ENCODE measurements at regions of chr5 and their contacts with region 1.

Region 1: DNA sequence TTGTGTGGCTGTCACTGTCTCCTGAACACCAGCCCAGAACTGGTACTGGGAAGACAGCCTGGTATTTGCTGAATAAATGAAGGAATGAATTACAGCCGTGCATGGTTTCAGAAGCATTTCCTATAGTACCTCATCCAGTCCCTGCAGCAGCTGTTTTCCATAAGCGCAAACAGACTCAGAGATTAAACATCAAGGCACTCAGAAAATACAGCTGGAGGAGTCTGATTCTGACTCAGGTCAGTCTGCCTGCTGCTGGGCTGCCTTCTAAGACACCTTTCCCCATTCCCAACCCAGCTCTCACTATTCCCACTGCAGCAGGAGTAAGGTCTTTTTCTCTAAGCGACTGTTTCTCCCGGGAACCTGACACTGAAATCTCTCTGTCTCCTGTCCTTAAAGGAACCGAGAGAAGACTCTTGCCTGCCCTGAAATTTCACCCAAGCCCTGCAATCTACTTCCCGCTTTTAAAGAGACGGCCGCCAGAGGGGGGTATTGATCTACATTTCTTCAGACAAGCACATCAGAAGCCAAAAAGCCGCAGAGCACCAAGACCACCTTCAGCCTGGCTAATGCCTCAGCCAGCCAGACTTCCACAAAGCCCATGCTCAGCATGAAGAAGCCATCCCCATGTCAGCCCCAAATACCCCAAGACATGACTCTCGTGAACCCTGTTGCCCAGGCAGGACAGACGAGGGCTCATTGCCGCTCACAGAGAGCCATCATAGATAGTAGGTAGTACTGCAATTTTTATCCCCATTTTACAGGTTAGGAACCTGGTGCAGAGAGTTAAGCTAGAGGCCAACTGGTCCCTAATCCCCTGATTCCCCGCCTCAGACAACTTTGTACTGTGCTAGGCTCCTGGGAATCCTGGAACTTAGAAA is 5.4 kb upstream of the FOXI1 start:
- DNase-seq: peak; percentile 54 to 78
- ATAC-seq: peak; percentile 80 to 90
- H3K4me3 ChIP-seq: no peak overlapping the region
- H3K27ac ChIP-seq: peak overlapping the region in 1 of 2 experiments; percentile 67; a peak in 3 of 6 replicates
- H3K4me1 ChIP-seq: peaks cover 7% of the 10 kb centered on the region; the same call in 1 of the 3 replicates
- CTCF ChIP-seq: peak; percentile 89
- EP300 ChIP-seq: no peak
- POLR2A ChIP-seq: no peak
- RAD21 ChIP-seq: peak; percentile 95 to 98

Region 2: GRCh38 chr5:169701910-169702451 is 398.3 kb before region 1 on chr5:
- CTCF ChIA-PET with region 1: interaction called, 28 read pairs
- POLR2A ChIA-PET with region 1: no interaction called
- DNase-seq: peak in 1 of 2 experiments; percentile 17
- ATAC-seq: peak; percentile 48 to 75; a peak in 4 of 6 replicates
- H3K4me3 ChIP-seq: no peak overlapping the region
- H3K27ac ChIP-seq: peak overlapping the region; percentile 29 to 60; a peak in 3 of 6 replicates
- H3K4me1 ChIP-seq: peaks cover 31% of the 10 kb centered on the region
- CTCF ChIP-seq: peak; percentile 76
- EP300 ChIP-seq: no peak
- POLR2A ChIP-seq: no peak
- RAD21 ChIP-seq: peak; percentile 80 to 81

Region 3: GRCh38 chr5:170111088-170111785 is 10.9 kb after region 1 on chr5:
- CTCF ChIA-PET with region 1: interaction called, 63 read pairs
- POLR2A ChIA-PET with region 1: no interaction called
- DNase-seq: no peak
- ATAC-seq: no peak
- H3K4me3 ChIP-seq: no peak overlapping the region
- H3K27ac ChIP-seq: no peak overlapping the region
- H3K4me1 ChIP-seq: no peaks in the 10 kb centered on the region
- CTCF ChIP-seq: no peak
- EP300 ChIP-seq: no peak
- POLR2A ChIP-seq: no peak
- RAD21 ChIP-seq: no peak

Region 4: GRCh38 chr5:170151097-170151831 is 51.0 kb after region 1 on chr5:
- CTCF ChIA-PET with region 1: interaction called, 17 read pairs
- POLR2A ChIA-PET with region 1: no interaction called
- DNase-seq: peak; percentile 84 to 88
- ATAC-seq: peak; percentile 84 to 90
- H3K4me3 ChIP-seq: no peak overlapping the region
- H3K27ac ChIP-seq: peak overlapping the region; percentile 65 to 87
- H3K4me1 ChIP-seq: peaks cover 25% of the 10 kb centered on the region
- CTCF ChIP-seq: no peak
- EP300 ChIP-seq: peak; percentile 43 to 84; a peak in 3 of 5 replicates
- POLR2A ChIP-seq: no peak
- RAD21 ChIP-seq: no peak; a peak in 1 of 5 replicates

Region 5: GRCh38 chr5:170195961-170196360 is 95.7 kb after region 1 on chr5:
- CTCF ChIA-PET with region 1: interaction called, 691 read pairs
- POLR2A ChIA-PET with region 1: no interaction called
- DNase-seq: no peak
- ATAC-seq: no peak
- H3K4me3 ChIP-seq: no peak overlapping the region
- H3K27ac ChIP-seq: no peak overlapping the region
- H3K4me1 ChIP-seq: no peaks in the 10 kb centered on the region
- CTCF ChIP-seq: no peak
- EP300 ChIP-seq: no peak
- POLR2A ChIP-seq: no peak
- RAD21 ChIP-seq: no peak

Region 6: DNA sequence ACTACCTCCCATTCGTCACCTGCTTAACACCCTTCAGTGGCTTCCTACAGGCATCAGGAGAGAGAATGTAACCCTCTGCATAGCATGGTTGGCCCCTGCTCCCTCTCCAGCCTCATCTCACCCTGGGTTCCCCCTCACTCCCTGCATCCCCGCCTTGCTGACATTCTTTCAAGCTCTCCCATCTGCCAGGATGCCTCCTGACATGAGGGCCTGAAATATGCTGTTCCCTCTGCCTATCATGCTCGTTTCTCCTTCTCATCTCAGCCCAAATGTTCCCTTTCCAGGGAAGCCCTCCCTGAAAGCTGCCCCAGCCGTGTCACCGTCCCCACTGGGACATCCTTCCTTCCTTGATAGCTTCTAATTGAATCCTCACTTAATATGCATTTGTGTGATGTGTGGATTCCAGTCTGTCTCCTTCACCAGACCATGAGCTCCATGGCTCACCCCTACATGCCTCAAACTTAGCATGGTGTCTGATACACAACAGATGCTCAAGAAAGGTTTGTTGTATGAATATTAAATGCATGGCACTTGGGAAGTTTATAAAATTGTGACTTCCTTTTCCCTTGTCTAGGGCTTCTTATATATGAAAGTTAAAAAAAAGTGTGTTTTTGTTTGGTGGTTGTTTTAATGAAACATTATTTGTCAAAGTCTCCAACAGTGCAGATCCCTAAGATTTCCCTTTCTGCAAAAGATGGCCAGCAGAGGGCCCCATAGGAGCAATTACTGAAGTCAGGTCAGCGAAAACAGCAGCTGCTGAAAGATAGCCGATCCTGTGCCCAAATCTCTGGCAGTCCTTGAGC is 125.2 kb after region 1 on chr5:
- CTCF ChIA-PET with region 1: interaction called, 28 read pairs
- POLR2A ChIA-PET with region 1: no interaction called
- DNase-seq: peak; percentile 66 to 68
- ATAC-seq: peak; percentile 82 to 96; a peak in 4 of 6 replicates
- H3K4me3 ChIP-seq: no peak overlapping the region
- H3K27ac ChIP-seq: no peak overlapping the region
- H3K4me1 ChIP-seq: peaks cover 1% of the 10 kb centered on the region
- CTCF ChIP-seq: peak; percentile 85
- EP300 ChIP-seq: no peak
- POLR2A ChIP-seq: no peak
- RAD21 ChIP-seq: peak; percentile 86 to 90

Measured in A549 (cell line).